ENCODE measurements at regions of chr3 and their contacts with region 1.

Region 1: GRCh38 chr3:155323063-155323666 is 29.7 kb upstream of the STRIT1 start:
- DNase-seq: no peak
- ATAC-seq: peak; percentile 83

Region 2: GRCh38 chr3:154334973-154335420 is 988.2 kb before region 1 on chr3:
- intact Hi-C with region 1: loop called (anchors 10 kb)
- DNase-seq: no peak
- ATAC-seq: no peak

Region 3: DNA sequence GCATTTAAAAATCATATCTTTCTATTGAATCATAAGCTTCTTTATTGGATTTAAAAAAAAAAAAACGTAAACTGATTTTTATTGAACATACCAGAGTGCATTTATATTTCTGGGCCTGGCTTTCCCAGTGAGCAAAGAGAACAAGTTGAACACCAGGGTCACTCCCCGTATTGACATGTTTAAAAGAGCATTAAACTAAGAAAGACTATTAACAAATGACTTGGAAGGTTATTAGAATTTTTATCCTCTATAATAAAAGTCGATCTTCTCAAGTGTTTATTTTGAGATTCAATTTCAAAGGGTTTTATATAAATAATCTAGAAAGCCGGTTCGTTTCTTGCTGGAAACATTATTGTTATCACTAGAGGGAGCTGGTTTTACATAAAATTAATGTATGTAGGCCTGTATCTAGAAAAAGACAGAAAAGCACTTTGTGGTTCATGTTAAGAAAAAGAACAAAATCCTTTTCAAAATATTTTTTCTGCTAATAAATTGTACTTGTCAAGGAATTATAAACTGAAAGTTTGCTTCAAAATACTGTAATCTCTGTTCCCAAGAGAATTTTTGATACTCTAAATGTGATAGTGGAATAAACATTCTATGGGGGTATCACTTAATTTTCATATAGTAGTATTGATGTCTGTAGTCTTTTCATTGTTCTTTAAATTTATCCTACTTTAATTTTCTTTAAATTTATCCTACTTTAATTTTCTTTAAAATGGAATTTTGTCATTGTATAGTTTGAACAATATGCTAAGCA is 564.9 kb before region 1 on chr3:
- intact Hi-C with region 1: loop called (anchors 5 kb)
- DNase-seq: no peak
- ATAC-seq: peak; percentile 60